CD8-positive, alpha-beta T cell (primary cell): ENCODE measurements at regions of chr11 and their contacts with region 1.

Region 1: GRCh38 chr11:114262681-114263512 is 33.3 kb upstream of the NNMT start:
- DNase-seq: peak in 3 of 9 experiments; percentile 30 to 55 (median 42)
- ATAC-seq: peak; percentile 65
- H3K4me3 ChIP-seq: no peak overlapping the region
- H3K4me3 Mint-ChIP-seq: no peak overlapping the region
- H3K27ac ChIP-seq: no peak overlapping the region
- H3K27ac Mint-ChIP-seq: no peak overlapping the region
- H3K4me1 ChIP-seq: no peaks in the 10 kb centered on the region
- H3K4me1 Mint-ChIP-seq: peaks cover 4% of the 10 kb centered on the region
- H3K27me3 ChIP-seq: no peaks in the 10 kb centered on the region
- H3K27me3 Mint-ChIP-seq: no peaks in the 10 kb centered on the region
- CTCF ChIP-seq: peak; percentile 42

Region 2: GRCh38 chr11:113896156-113896879 is 366.6 kb before region 1 on chr11:
- CTCF ChIA-PET with region 1: interaction called, 299 read pairs
- POLR2A ChIA-PET with region 1: interaction called, 3 read pairs
- intact Hi-C with region 1: loop called (anchors 1 kb)
- DNase-seq: peak in 8 of 9 experiments; percentile 18 to 62 (median 35)
- ATAC-seq: peak; percentile 42
- H3K4me3 ChIP-seq: no peak overlapping the region
- H3K4me3 Mint-ChIP-seq: no peak overlapping the region
- H3K27ac ChIP-seq: no peak overlapping the region
- H3K27ac Mint-ChIP-seq: no peak overlapping the region
- H3K4me1 ChIP-seq: no peaks in the 10 kb centered on the region
- H3K4me1 Mint-ChIP-seq: peaks cover 2% of the 10 kb centered on the region
- H3K27me3 ChIP-seq: no peaks in the 10 kb centered on the region
- H3K27me3 Mint-ChIP-seq: no peaks in the 10 kb centered on the region
- CTCF ChIP-seq: peak; percentile 70

Region 3: GRCh38 chr11:114044042-114044871 is 218.6 kb before region 1 on chr11:
- CTCF ChIA-PET with region 1: interaction called, 316 read pairs
- POLR2A ChIA-PET with region 1: no interaction called
- intact Hi-C with region 1: no loop called
- DNase-seq: peak in 2 of 9 experiments; percentile 30 to 41
- ATAC-seq: peak; percentile 65
- H3K4me3 ChIP-seq: no peak overlapping the region
- H3K4me3 Mint-ChIP-seq: no peak overlapping the region
- H3K27ac ChIP-seq: no peak overlapping the region
- H3K27ac Mint-ChIP-seq: peak overlapping the region; percentile 24
- H3K4me1 ChIP-seq: no peaks in the 10 kb centered on the region
- H3K4me1 Mint-ChIP-seq: peaks cover 15% of the 10 kb centered on the region
- H3K27me3 ChIP-seq: no peaks in the 10 kb centered on the region
- H3K27me3 Mint-ChIP-seq: no peaks in the 10 kb centered on the region
- CTCF ChIP-seq: no peak

Region 4: GRCh38 chr11:114128399-114128798 is 134.5 kb before region 1 on chr11:
- CTCF ChIA-PET with region 1: interaction called, 12 read pairs
- POLR2A ChIA-PET with region 1: no interaction called
- intact Hi-C with region 1: no loop called
- DNase-seq: no peak
- ATAC-seq: no peak
- H3K4me3 ChIP-seq: no peak overlapping the region
- H3K4me3 Mint-ChIP-seq: no peak overlapping the region
- H3K27ac ChIP-seq: no peak overlapping the region
- H3K27ac Mint-ChIP-seq: no peak overlapping the region
- H3K4me1 ChIP-seq: no peaks in the 10 kb centered on the region
- H3K4me1 Mint-ChIP-seq: peaks cover 30% of the 10 kb centered on the region
- H3K27me3 ChIP-seq: no peaks in the 10 kb centered on the region
- H3K27me3 Mint-ChIP-seq: no peaks in the 10 kb centered on the region
- CTCF ChIP-seq: no peak

Region 5: GRCh38 chr11:114166897-114167323 is 96.0 kb before region 1 on chr11:
- CTCF ChIA-PET with region 1: interaction called, 40 read pairs
- POLR2A ChIA-PET with region 1: interaction called, 3 read pairs
- intact Hi-C with region 1: no loop called
- DNase-seq: peak in 2 of 9 experiments; percentile 62 to 74
- ATAC-seq: peak; percentile 45
- H3K4me3 ChIP-seq: no peak overlapping the region
- H3K4me3 Mint-ChIP-seq: peak overlapping the region; percentile 64
- H3K27ac ChIP-seq: no peak overlapping the region
- H3K27ac Mint-ChIP-seq: peak overlapping the region; percentile 77
- H3K4me1 ChIP-seq: peaks cover 84% of the 10 kb centered on the region
- H3K4me1 Mint-ChIP-seq: peaks cover 97% of the 10 kb centered on the region
- H3K27me3 ChIP-seq: no peaks in the 10 kb centered on the region
- H3K27me3 Mint-ChIP-seq: no peaks in the 10 kb centered on the region
- CTCF ChIP-seq: no peak

Region 6: GRCh38 chr11:114243461-114244372 is 19.2 kb before region 1 on chr11:
- CTCF ChIA-PET with region 1: interaction called, 160 read pairs
- POLR2A ChIA-PET with region 1: no interaction called
- intact Hi-C with region 1: no loop called
- DNase-seq: no peak
- ATAC-seq: no peak
- H3K4me3 ChIP-seq: no peak overlapping the region
- H3K4me3 Mint-ChIP-seq: no peak overlapping the region
- H3K27ac ChIP-seq: no peak overlapping the region
- H3K27ac Mint-ChIP-seq: no peak overlapping the region
- H3K4me1 ChIP-seq: no peaks in the 10 kb centered on the region
- H3K4me1 Mint-ChIP-seq: no peaks in the 10 kb centered on the region
- H3K27me3 ChIP-seq: no peaks in the 10 kb centered on the region
- H3K27me3 Mint-ChIP-seq: no peaks in the 10 kb centered on the region
- CTCF ChIP-seq: no peak